ENCODE measurements at regions of chr15 and their contacts with region 1.

Region 1: GRCh38 chr15:63093486-63094205 is 28.0 kb upstream of the LACTB start:
- DNase-seq: peak; percentile 92
- H3K4me3 Mint-ChIP-seq: no peak overlapping the region
- H3K27ac Mint-ChIP-seq: no peak overlapping the region
- H3K4me1 Mint-ChIP-seq: peaks cover 4% of the 10 kb centered on the region
- H3K27me3 Mint-ChIP-seq: peaks cover 5% of the 10 kb centered on the region

Region 2: DNA sequence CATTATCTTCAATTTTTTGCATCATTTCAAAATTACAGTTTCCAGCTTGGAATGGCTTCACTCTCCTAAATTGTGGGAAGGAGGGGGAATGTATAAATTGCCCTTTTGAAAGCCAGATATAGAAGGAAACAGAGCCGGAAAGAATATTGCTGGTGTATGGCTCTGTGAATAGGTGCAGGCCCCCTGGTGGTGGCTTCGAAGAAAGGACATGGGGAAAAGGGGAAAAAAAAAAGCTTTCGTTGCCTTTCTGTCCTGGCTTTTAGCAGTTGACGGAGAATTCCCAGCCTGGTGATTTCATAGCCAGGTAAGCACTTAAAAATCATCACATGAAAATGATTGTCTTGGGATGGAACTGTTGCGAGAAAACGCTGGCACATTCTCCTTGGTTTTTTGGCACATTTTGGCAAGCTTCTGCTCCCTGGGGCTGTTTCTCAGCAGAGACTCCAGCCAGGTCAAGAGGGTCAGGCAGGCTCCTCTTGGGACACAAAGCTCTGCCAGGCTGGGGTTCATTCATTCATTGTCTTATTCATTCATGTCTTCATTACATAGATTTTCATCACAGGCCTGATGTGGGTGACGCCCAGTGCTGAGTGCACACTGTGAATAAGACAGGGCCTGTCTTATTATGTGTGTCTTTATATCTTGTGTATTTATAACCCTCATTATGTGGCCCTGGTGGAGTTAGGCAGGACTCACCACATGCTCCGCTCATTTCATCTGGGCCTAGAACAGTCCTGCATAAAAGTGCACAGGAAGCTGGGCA is 351.1 kb before region 1 on chr15:
- intact Hi-C with region 1: loop called (anchors 5 kb)
- DNase-seq: peak; percentile 72
- H3K4me3 Mint-ChIP-seq: no peak overlapping the region
- H3K27ac Mint-ChIP-seq: no peak overlapping the region
- H3K4me1 Mint-ChIP-seq: no peaks in the 10 kb centered on the region
- H3K27me3 Mint-ChIP-seq: no peaks in the 10 kb centered on the region

Region 3: GRCh38 chr15:62847900-62848489 is 245.7 kb before region 1 on chr15:
- intact Hi-C with region 1: loop called (anchors 5 kb)
- DNase-seq: peak; percentile 81
- H3K4me3 Mint-ChIP-seq: no peak overlapping the region
- H3K27ac Mint-ChIP-seq: no peak overlapping the region
- H3K4me1 Mint-ChIP-seq: no peaks in the 10 kb centered on the region
- H3K27me3 Mint-ChIP-seq: no peaks in the 10 kb centered on the region

Region 4: GRCh38 chr15:63048115-63048775 is 45.4 kb before region 1 on chr15:
- intact Hi-C with region 1: loop called (anchors 1 kb)
- DNase-seq: peak; percentile 95
- H3K4me3 Mint-ChIP-seq: peak overlapping the region; percentile 81
- H3K27ac Mint-ChIP-seq: peak overlapping the region; percentile 59
- H3K4me1 Mint-ChIP-seq: peaks cover 21% of the 10 kb centered on the region
- H3K27me3 Mint-ChIP-seq: peaks cover 51% of the 10 kb centered on the region

Region 5: DNA sequence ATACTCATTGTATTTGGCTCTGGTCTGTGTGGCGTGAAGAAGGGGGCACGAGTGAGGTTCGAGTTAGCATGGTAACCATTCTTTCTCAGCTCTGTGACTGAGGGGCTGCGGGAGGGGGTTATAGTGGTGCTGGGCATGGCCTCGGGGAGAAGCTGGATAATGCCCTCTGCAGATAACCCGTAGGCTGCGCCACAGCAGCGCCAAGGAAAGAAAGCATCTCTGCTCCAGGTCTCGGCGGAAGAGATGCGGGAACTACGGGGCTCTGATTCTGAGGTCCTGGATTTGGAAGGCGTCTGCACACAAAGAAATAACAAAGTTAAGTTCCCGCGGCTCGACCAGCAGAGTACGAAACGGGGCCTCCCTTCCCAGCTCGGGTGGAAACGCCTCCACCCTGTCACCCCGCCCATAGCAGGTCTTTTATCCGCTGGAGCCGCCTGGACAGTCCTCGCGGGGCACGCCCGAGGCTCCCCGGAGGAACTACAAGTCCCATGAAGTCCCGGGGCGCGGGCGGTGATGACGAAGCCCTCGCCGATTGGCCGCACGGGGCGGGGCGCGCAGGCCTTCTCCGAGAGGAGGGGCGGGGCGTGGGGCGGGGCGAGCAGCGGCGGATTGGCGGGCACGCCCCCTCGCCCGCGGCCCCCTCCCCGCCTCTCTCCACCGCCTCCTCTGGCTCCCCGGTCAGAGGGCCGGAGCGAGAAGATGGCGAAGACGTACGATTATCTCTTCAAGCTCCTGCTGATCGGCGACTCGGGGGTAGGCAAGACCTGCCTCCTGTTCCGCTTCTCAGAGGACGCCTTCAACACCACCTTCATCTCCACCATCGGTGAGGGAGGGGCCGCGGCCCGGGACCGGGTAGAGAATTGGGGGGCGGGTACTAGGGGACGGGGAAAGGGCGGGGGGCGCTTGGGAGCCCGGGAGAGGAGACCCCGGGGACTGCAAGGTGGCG is 95.6 kb after region 1 on chr15 and contains the start of gene RAB8B:
- intact Hi-C with region 1: no loop called
- DNase-seq: peak; percentile 99
- H3K4me3 Mint-ChIP-seq: peak within 1 kb of the TSS; percentile 92
- H3K27ac Mint-ChIP-seq: peak within 1 kb of the TSS; percentile 92
- H3K4me1 Mint-ChIP-seq: peaks cover 39% of the 10 kb centered on the region
- H3K27me3 Mint-ChIP-seq: peaks cover 6% of the 10 kb centered on the region
- total RNA-seq, gene RAB8B: 186 and 187 TPM in 2 replicates

Measured in activated CD4-positive, alpha-beta T cell treated with anti-CD3 and anti-CD28 coated beads, Interleukin-2, amount 10 ng/mL, durations not matched to agents 24 days and 14 days (primary cell).